Ascending aorta (tissue), 2 donors: ENCODE measurements at regions of chr12 and their contacts with region 1.

Region 1: DNA sequence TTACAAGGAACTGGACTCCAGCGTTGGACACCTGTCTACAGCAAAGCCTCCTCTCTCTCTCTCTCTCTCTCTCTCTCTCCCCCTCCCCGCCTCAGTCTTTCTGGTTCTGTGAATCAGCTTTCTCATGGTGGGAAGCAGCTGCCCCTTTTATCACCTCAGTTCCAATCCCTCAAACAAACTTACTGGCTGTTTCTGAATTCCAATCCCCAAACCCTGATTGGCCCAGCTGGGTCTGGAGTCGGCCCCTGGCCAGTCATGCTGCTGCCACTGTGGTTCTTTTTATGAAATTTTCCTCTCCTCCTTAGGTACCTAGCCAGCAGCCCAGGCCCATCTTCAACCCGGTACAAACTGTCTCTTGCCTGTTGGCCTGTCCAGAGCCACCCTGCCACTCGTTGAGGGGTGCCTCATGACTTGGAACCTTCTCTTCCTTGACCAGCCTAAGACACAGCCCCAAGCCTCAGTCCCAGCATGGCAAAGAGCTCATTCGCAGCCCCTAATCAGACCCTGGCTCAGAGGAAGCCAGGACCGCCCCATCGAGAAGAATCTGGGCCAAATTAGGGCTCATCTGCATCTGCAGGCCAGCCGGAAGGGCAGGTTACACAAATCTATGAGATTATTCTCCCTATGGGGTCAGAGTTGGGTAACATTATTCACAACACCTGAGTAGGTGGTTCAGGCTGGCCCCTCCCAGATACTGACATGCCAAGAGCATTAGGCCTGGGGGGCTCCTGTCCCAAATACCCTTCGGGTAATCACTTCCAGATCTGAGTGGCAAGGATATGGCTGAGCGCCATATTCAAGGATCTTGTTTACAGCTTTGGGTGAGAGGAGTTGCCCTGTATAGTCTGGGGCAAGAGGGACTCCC is 9.5 kb upstream of the MORN3 start:
- DNase-seq: no peak
- H3K4me3 ChIP-seq: no peak overlapping the region
- H3K27ac ChIP-seq: no peak overlapping the region
- H3K4me1 ChIP-seq: no peaks in the 10 kb centered on the region
- H3K27me3 ChIP-seq: no peaks in the 10 kb centered on the region
- CTCF ChIP-seq: no peak

Region 2: DNA sequence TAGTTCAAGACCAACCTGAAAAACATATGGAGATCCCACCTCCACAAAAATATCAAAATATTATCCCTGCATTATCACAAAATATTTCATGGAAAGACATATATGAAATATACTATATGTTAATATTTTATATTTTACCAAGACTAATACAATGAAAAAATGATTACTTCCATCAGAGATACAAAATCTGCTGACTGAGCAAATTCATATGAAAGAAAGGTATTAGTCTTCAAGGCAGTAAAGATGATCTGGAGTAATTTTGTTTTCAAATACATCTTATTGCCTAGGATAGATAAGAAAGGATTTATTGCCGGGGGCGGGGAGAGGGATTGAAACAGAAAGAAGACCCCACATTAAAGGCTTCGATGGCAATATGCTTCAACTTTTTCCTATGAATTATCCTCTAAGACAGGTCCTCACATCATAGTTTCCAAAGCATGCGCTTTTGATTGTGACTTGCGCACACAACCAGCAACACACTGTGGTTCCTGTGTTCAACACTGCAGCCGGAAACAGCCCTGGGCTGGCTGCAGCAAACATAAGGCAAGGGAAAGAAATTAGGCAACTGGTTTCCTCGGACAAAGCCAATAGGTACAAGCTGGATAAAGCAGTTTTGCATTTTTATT is 858.0 kb before region 1 on chr12:
- intact Hi-C with region 1: no loop called
- DNase-seq: no peak
- H3K4me3 ChIP-seq: no peak overlapping the region
- H3K27ac ChIP-seq: no peak overlapping the region
- H3K4me1 ChIP-seq: no peaks in the 10 kb centered on the region
- H3K27me3 ChIP-seq: no peaks in the 10 kb centered on the region
- CTCF ChIP-seq: no peak

Region 3: GRCh38 chr12:121499929-121500793 is 178.8 kb before region 1 on chr12:
- intact Hi-C with region 1: loop called (anchors 1 kb)
- DNase-seq: peak in 1 of 2 donors; percentile 88
- H3K4me3 ChIP-seq: peak overlapping the region; percentile 43 to 57
- H3K27ac ChIP-seq: peak overlapping the region; percentile 69 to 82
- H3K4me1 ChIP-seq: no peaks in the 10 kb centered on the region
- H3K27me3 ChIP-seq: no peaks in the 10 kb centered on the region
- CTCF ChIP-seq: peak; percentile 71 to 96 (median 95)

Region 4: DNA sequence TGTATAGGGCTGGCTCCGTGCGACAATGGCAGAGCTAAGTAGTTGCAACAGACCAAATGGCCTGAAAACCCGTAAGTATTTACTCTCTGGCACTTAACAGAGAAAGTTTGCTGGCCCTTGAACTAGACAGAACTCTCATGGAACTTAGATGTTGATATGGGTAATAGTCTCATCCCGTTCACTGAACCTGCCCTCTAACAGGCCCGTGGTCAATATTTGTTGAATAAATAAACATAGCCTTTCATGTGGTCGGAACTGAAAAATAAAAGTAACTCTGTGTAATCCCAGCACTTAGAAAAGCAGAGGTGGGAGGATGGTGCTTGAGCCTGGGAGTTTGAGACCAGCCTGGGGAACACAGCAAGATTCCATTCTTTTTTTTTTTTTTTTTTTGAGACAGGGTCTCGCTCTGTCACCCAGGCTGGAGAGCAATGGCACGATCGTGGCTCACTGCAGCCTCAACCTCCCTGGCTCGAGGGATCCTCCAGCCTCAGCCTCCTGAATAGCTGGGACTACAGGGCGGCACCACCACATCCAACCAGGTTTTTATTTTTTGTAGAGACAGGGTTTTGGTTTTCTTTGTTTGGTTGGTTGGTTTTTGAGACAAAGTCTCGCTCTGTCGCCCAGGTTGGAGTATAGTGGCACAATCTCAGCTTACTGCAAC is 127.8 kb before region 1 on chr12:
- intact Hi-C with region 1: loop called (anchors 1 kb)
- DNase-seq: no peak
- H3K4me3 ChIP-seq: no peak overlapping the region
- H3K27ac ChIP-seq: no peak overlapping the region
- H3K4me1 ChIP-seq: no peaks in the 10 kb centered on the region
- H3K27me3 ChIP-seq: no peaks in the 10 kb centered on the region
- CTCF ChIP-seq: no peak

Region 5: GRCh38 chr12:122306407-122306806 is 627.5 kb after region 1 on chr12:
- intact Hi-C with region 1: no loop called
- DNase-seq: no peak
- H3K4me3 ChIP-seq: no peak overlapping the region
- H3K27ac ChIP-seq: no peak overlapping the region
- H3K4me1 ChIP-seq: no peaks in the 10 kb centered on the region
- H3K27me3 ChIP-seq: no peaks in the 10 kb centered on the region
- CTCF ChIP-seq: no peak